Naive thymus-derived CD4-positive, alpha-beta T cell (primary cell): ENCODE measurements at regions of chr4 and their contacts with region 1.

Region 1: DNA sequence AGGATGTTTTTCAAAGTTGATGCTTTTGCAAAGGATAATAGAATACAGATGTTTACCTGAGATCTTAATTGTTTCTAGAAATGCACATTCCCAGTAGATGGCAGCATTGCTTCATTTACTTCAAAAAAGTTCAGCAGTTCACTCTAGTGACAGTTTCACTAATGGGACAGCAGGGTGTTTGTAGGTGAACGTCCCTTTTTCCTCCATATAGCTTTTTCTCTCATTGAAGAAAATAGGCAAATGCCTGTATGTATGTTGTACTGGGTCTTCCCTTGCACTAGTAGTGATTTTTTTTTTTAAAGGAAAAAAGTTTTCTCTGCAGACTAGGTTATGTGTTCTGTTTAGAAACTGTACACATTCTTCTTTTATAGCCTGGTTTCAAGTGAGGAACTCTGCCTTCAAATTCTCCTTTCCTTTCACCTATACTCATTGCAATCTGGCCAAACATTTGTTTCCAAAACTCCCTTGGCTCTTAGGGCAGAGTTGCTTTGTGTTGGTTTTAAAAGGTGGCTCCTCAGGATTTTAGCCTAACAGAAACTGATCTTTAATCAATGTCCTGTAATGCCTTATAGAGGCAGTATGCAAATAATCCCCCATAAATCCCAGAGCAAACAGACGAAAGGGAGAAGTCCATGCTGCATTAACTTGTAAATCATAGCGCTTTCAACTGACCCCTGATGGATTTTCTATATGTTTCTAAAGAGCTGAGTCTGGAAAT is 86.3 kb downstream of the EGF start:
- DNase-seq: peak in 7 of 9 donors; percentile 30 to 70 (median 56)
- ATAC-seq: peak; percentile 83
- H3K4me3 ChIP-seq: no peak overlapping the region
- H3K4me3 Mint-ChIP-seq: no peak overlapping the region
- H3K27ac ChIP-seq: no peak overlapping the region
- H3K27ac Mint-ChIP-seq: no peak overlapping the region
- H3K4me1 ChIP-seq: no peaks in the 10 kb centered on the region
- H3K4me1 Mint-ChIP-seq: peaks cover 0 to 31% (median 0%) of the 10 kb centered on the region in 7 donors
- H3K27me3 ChIP-seq: no peaks in the 10 kb centered on the region
- H3K27me3 Mint-ChIP-seq: peaks cover 0 to 32% (median 5%) of the 10 kb centered on the region in 5 donors

Region 2: GRCh38 chr4:109424093-109424841 is 574.8 kb before region 1 on chr4:
- CTCF ChIA-PET with region 1: no interaction called
- POLR2A ChIA-PET with region 1: no interaction called
- intact Hi-C with region 1: loop called (anchors 1 kb)
- DNase-seq: no peak
- ATAC-seq: no peak
- H3K4me3 ChIP-seq: no peak overlapping the region
- H3K4me3 Mint-ChIP-seq: no peak overlapping the region
- H3K27ac ChIP-seq: no peak overlapping the region
- H3K27ac Mint-ChIP-seq: no peak overlapping the region
- H3K4me1 ChIP-seq: no peaks in the 10 kb centered on the region
- H3K4me1 Mint-ChIP-seq: peaks cover 4 to 7% (median 5%) of the 10 kb centered on the region in 7 donors
- H3K27me3 ChIP-seq: no peaks in the 10 kb centered on the region
- H3K27me3 Mint-ChIP-seq: peaks cover 0 to 10% (median 0%) of the 10 kb centered on the region in 5 donors

Region 3: DNA sequence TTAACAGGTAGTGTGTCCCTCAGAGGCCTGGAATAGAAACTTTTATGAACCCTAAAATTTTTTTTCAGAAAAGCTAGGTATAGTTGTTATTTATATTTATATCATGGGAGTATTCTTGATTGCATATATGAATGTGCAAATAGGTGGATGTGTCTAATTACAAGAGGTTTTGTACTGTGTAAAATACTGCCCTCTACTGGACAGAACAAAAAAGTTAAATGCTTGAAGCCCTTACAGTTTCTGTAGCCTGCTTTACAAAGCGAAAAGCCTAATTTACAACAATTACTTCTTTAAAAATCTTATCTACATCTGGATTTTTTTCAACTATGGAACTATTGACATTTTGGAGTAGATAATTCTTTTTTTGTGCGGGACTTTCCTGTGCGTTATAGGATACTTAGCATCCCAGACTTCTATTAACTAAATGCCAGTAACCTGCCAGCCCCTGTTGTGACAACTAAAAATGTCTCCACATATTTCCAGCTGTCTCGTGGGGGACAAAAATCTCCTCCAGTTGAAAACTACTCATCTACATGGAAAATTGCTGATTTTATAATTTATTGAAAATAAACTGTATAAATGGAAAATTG is 512.0 kb after region 1 on chr4:
- CTCF ChIA-PET with region 1: interaction called, 111 read pairs
- POLR2A ChIA-PET with region 1: interaction called, 3 read pairs
- intact Hi-C with region 1: loop called (anchors 1 kb)
- DNase-seq: peak in 7 of 9 donors; percentile 12 to 61 (median 48)
- ATAC-seq: peak; percentile 85
- H3K4me3 ChIP-seq: no peak overlapping the region
- H3K4me3 Mint-ChIP-seq: no peak overlapping the region
- H3K27ac ChIP-seq: no peak overlapping the region
- H3K27ac Mint-ChIP-seq: no peak overlapping the region
- H3K4me1 ChIP-seq: peaks cover 0 to 5% of the 10 kb centered on the region in 2 donors
- H3K4me1 Mint-ChIP-seq: peaks cover 4 to 12% (median 10%) of the 10 kb centered on the region in 7 donors
- H3K27me3 ChIP-seq: no peaks in the 10 kb centered on the region
- H3K27me3 Mint-ChIP-seq: peaks cover 0 to 6% (median 0%) of the 10 kb centered on the region in 5 donors

Region 4: DNA sequence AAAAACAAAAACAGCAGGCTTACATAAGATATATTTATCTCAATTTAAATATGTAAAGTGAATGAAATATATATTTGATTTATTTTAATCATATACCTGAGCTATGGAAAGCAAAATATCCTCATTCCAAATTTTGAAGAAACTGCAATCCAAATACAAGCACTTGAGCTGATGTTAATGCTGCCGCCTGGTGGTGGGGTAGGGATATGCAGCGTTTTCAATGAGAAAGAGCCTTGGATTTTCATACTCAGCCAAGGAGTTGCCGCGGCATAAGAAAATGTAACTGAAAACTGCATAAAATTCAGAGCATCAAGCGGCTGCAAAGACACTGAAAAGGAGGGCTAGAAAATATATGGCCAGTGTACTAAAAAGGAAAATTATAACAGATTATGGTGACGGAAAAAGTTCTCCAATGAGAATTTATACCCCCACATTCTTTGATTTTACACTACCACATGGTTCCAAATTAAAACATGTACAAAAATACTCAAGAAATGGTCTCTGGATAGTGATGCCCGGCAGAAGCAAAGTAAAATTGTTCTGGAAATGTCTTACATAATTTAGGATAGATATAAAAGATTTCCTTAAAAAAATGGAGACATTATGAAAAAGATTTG is 1284.1 kb after region 1 on chr4:
- CTCF ChIA-PET with region 1: no interaction called
- POLR2A ChIA-PET with region 1: no interaction called
- intact Hi-C with region 1: loop called in 1 of 2 experiments (anchors 1 kb)
- DNase-seq: peak in 3 of 9 donors; percentile 3 to 42 (median 9)
- ATAC-seq: no peak
- H3K4me3 ChIP-seq: no peak overlapping the region
- H3K4me3 Mint-ChIP-seq: no peak overlapping the region
- H3K27ac ChIP-seq: no peak overlapping the region
- H3K27ac Mint-ChIP-seq: no peak overlapping the region
- H3K4me1 ChIP-seq: no peaks in the 10 kb centered on the region
- H3K4me1 Mint-ChIP-seq: no peaks in the 10 kb centered on the region
- H3K27me3 ChIP-seq: no peaks in the 10 kb centered on the region
- H3K27me3 Mint-ChIP-seq: peaks cover 0 to 8% (median 3%) of the 10 kb centered on the region in 5 donors

Region 5: DNA sequence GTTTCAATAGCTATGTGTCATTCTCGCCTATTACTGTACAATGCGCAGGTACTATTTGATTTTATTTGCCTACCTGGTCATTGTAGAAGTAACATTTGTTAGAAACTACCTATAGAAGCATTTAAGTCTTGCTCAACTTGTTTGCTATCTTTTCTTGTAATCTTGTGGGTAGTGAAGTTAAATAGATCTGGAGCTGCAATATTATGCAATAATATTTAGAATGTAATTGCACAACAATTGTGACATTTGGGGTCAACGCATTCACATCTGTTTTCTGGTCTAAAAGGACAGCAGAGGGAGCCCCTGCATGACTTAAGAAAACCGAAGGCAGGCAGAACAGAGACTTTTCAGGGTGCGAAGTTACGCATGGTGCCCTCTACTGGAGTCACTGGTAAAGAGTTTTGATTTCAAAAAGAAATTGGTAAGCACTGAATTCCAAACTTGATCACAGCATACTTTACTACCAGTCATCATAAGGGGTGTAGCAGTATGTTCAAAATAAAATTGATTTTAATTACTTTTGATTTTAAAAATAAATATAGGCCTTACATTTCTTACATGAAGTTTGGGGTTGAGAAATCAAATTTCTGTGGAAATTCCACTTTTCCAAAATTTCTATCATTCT is 1643.0 kb after region 1 on chr4:
- CTCF ChIA-PET with region 1: no interaction called
- POLR2A ChIA-PET with region 1: no interaction called
- intact Hi-C with region 1: loop called in 1 of 2 experiments (anchors 5 kb)
- DNase-seq: peak in 1 of 9 donors; percentile 21
- ATAC-seq: peak; percentile 51
- H3K4me3 ChIP-seq: no peak overlapping the region
- H3K4me3 Mint-ChIP-seq: no peak overlapping the region
- H3K27ac ChIP-seq: no peak overlapping the region
- H3K27ac Mint-ChIP-seq: no peak overlapping the region
- H3K4me1 ChIP-seq: no peaks in the 10 kb centered on the region
- H3K4me1 Mint-ChIP-seq: no peaks in the 10 kb centered on the region
- H3K27me3 ChIP-seq: no peaks in the 10 kb centered on the region
- H3K27me3 Mint-ChIP-seq: no peaks in the 10 kb centered on the region

Region 6: DNA sequence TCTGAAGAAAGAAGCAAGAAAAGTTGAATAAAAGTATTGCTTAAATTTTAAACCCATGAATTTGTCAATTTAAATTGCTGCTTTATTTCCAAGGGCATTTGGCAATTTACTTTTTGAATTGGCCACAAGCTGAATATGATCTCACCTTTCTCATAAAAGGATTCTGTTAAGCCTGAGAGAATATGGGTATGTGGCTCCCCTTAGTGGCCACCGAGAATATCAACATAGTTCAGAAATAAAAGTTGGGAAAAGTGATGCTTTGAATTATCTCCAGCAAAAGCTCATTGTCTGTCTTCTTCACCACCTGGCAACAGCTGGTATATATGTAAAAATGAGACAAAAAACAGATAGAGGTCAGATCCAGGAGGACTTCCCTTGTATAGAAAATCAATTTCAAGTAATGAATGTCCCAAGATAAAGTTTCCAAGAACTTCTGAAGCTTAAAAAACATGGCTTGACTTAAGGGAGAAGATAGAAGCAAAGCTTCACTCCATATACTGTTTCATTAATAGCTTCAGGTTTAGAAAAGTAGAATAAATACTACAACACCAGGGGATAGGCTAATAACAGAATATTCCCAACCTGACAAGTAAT is 1855.6 kb after region 1 on chr4:
- CTCF ChIA-PET with region 1: no interaction called
- POLR2A ChIA-PET with region 1: no interaction called
- intact Hi-C with region 1: loop called in 1 of 2 experiments (anchors 5 kb)
- DNase-seq: no peak
- ATAC-seq: no peak
- H3K4me3 ChIP-seq: no peak overlapping the region
- H3K4me3 Mint-ChIP-seq: no peak overlapping the region
- H3K27ac ChIP-seq: no peak overlapping the region
- H3K27ac Mint-ChIP-seq: no peak overlapping the region
- H3K4me1 ChIP-seq: no peaks in the 10 kb centered on the region
- H3K4me1 Mint-ChIP-seq: no peaks in the 10 kb centered on the region
- H3K27me3 ChIP-seq: no peaks in the 10 kb centered on the region
- H3K27me3 Mint-ChIP-seq: no peaks in the 10 kb centered on the region